Sigmoid colon (tissue), 7 donors: ENCODE measurements at regions of chr14 and their contacts with region 1.

Region 1: GRCh38 chr14:94936401-94936892 is 166.5 kb upstream of the GSC start:
- DNase-seq: peak; percentile 94
- H3K4me3 ChIP-seq: peak overlapping the region; percentile 21 to 44 (median 41)
- H3K27ac ChIP-seq: peak overlapping the region; percentile 90 to 95 (median 92)
- H3K4me1 ChIP-seq: peaks cover 0 to 59% (median 53%) of the 10 kb centered on the region in 4 donors
- H3K27me3 ChIP-seq: no peaks in the 10 kb centered on the region
- CTCF ChIP-seq: no peak
- EP300 ChIP-seq: peak in 2 of 4 donors; percentile 4 to 40
- POLR2A ChIP-seq: no peak

Region 2: GRCh38 chr14:94707494-94707893 is 229.0 kb before region 1 on chr14:
- intact Hi-C with region 1: no loop called
- DNase-seq: no peak
- H3K4me3 ChIP-seq: no peak overlapping the region
- H3K27ac ChIP-seq: no peak overlapping the region
- H3K4me1 ChIP-seq: peaks cover 0 to 2% (median under 1%) of the 10 kb centered on the region in 4 donors
- H3K27me3 ChIP-seq: no peaks in the 10 kb centered on the region
- CTCF ChIP-seq: no peak
- EP300 ChIP-seq: no peak
- POLR2A ChIP-seq: no peak

Region 3: DNA sequence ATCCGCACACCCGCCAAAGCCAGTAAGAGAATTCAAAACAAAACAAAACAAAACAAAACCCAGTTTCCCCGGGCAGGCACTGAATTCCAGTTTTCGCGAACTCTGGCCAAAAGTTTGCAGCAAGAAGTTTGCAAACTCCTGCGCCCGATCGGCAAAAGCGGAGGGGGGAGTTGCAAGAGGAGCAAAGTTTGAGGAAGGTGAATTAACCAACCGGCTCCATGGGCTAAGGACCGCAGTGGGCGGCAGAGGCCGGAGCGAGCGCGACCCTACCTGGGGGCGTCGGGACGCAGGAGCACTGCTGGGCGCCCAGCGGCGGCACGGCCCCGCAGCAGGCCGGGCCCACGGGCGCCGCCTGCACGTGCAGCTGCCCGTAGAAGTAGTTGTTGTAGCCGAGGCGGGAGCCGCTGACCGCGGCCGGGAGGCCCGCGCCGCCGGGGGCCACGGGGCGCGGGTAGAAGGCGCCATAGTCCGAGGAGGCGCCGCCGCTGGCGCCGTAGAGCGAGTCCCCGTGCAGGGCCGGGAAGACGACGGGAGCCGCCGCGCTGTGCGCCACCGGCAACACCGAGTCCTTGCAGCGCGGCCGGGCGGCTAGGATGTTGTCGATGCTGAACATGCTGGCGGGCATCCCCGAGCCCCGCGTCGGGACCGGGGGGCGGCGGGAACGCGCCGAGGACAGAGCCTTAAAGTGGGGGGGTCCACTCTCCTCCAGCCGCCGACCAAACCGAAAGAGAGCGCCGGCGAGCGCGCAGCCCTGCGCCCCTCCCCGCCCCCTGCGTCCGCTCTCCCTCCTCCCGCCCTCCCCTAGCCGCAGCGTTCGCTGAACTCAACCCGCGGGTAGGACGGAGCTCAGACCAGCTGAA is 166.8 kb before region 1 on chr14 and contains the start of gene GSC:
- intact Hi-C with region 1: loop called (anchors 10 kb)
- DNase-seq: no peak
- H3K4me3 ChIP-seq: peak within 1 kb of the TSS; percentile 27 to 59 (median 50)
- H3K27ac ChIP-seq: no peak within 1 kb of the TSS
- H3K4me1 ChIP-seq: peaks cover 0 to 28% (median 26%) of the 10 kb centered on the region in 4 donors
- H3K27me3 ChIP-seq: peaks cover 76 to 100% (median 77%) of the 10 kb centered on the region in 3 donors
- CTCF ChIP-seq: no peak
- EP300 ChIP-seq: no peak
- POLR2A ChIP-seq: no peak
- total RNA-seq, gene GSC: 0.33 to 7.5 (median 0.74) TPM

Region 4: DNA sequence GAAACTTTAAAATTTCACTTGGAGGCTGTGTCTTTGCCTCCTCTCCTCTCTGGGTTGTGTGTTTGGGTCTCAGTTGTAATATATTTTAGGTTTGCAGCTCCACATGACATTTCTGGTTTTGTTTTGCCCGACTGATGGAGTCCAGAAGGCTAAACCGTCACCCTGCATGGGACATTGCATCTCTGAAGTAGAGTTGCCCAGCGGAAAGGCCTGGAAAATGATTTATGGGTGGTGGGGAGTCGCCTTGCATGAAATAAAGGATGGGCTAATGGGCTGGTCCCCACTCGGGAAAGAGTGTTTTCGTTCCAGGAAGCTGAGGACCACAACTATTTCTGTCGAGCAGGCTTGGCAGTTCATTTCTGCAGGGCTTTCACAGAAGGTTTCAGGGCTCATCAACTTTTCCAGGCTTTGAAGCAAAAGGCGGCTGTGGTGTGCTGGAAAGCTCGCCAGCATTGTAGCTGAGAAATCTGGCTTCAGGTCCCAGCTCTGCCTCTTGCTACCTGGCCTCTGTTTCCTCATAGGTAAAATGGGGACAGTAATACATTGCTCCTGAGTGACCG is 91.8 kb before region 1 on chr14:
- intact Hi-C with region 1: loop called (anchors 2 kb)
- DNase-seq: peak; percentile 81
- H3K4me3 ChIP-seq: no peak overlapping the region
- H3K27ac ChIP-seq: peak overlapping the region in 3 of 4 donors; percentile 54 to 71 (median 63)
- H3K4me1 ChIP-seq: peaks cover 0 to 20% (median 19%) of the 10 kb centered on the region in 4 donors
- H3K27me3 ChIP-seq: no peaks in the 10 kb centered on the region
- CTCF ChIP-seq: no peak
- EP300 ChIP-seq: no peak
- POLR2A ChIP-seq: no peak

Region 5: DNA sequence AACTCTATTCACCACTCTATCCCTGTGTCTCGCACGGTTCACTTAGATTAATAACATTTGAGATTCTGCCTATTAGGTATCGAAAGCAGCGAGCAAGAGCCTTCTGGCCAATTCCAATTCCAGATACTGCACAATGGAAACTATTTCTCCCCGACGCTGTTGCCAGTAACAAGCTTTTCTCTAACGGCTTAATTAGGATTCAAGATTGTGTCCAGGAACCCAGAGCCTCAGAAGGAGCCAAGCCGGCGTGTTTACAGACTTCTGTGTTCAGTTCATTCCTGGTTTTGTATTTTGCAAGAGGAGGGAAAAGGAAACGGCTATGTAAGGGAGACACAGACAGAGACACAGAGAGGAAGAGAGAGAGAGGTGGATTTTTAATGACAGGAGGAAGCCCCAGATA is 35.3 kb after region 1 on chr14:
- intact Hi-C with region 1: loop called (anchors 2 kb)
- DNase-seq: peak; percentile 91
- H3K4me3 ChIP-seq: peak overlapping the region in 3 of 4 donors; percentile 12 to 25 (median 14)
- H3K27ac ChIP-seq: peak overlapping the region; percentile 64 to 83 (median 78)
- H3K4me1 ChIP-seq: peaks cover 0 to 15% (median 10%) of the 10 kb centered on the region in 4 donors
- H3K27me3 ChIP-seq: no peaks in the 10 kb centered on the region
- CTCF ChIP-seq: no peak
- EP300 ChIP-seq: peak in 3 of 4 donors; percentile 51 to 83 (median 61)
- POLR2A ChIP-seq: no peak

Region 6: GRCh38 chr14:95011445-95012006 is 75.1 kb after region 1 on chr14:
- intact Hi-C with region 1: loop called (anchors 2 kb)
- DNase-seq: peak; percentile 75
- H3K4me3 ChIP-seq: peak overlapping the region in 2 of 4 donors; percentile 6 to 15
- H3K27ac ChIP-seq: peak overlapping the region; percentile 6 to 76 (median 68)
- H3K4me1 ChIP-seq: peaks cover 0 to 50% (median 43%) of the 10 kb centered on the region in 4 donors
- H3K27me3 ChIP-seq: no peaks in the 10 kb centered on the region
- CTCF ChIP-seq: no peak
- EP300 ChIP-seq: peak in 2 of 4 donors; percentile 58 to 68
- POLR2A ChIP-seq: no peak

Region 7: GRCh38 chr14:95046711-95047681 is 110.5 kb after region 1 on chr14:
- intact Hi-C with region 1: loop called (anchors 1 kb)
- DNase-seq: peak; percentile 90
- H3K4me3 ChIP-seq: no peak overlapping the region
- H3K27ac ChIP-seq: peak overlapping the region in 3 of 4 donors; percentile 68 to 77 (median 71)
- H3K4me1 ChIP-seq: peaks cover 0 to 23% (median 21%) of the 10 kb centered on the region in 4 donors
- H3K27me3 ChIP-seq: no peaks in the 10 kb centered on the region
- CTCF ChIP-seq: no peak
- EP300 ChIP-seq: peak; percentile 37 to 90 (median 66)
- POLR2A ChIP-seq: no peak